ENCODE measurements at regions of chr19 and their contacts with region 1.

Region 1: GRCh38 chr19:51473009-51473707 is 5.2 kb upstream of the CEACAM18 start:
- DNase-seq: no peak
- ATAC-seq: peak; percentile 60

Region 2: DNA sequence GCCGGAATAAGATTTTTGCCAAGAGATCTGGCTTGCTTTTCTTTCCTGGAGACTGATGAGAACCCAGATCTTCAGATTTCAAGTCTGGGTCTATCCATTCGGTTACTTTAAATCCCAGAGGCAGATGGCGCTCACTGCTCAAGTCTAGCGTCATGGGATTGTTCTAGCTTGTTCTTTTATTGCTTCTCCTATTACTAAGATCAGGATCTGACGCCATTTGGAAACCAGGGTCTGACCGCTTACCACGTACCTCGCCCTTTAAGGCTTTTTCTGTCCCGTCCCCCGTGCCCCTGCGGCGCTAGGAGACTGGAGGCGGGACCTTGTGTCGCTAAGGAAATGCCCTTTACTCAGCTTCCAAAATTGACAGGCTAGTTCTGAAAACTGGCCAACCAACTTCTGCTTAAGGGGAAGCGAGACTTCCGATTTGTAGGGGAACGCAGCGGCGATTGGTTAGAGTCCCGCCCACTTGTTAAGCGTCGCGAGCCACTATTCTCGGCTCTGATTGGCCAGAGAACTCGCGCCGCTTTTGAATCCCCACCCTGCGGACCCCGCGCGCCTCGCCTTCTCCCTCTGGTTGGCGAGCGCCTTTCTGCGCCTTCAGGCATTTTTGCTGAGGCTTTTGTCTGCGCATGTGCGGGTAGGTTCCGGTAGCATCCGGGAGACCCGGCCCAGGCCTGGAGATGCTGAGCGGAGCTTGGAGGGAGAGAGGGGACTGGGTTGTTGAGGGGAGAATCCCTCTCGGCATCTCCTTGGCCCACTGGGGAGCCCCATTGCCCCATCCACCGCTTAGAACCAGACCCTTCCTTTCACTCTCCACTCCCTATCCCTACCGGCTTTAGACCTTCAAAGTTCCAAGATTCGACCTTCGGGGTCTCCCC is 79.0 kb before region 1 on chr19:
- intact Hi-C with region 1: no loop called
- DNase-seq: peak; percentile 95
- ATAC-seq: peak; percentile 98

Region 3: GRCh38 chr19:51460164-51460992 is 12.8 kb before region 1 on chr19:
- intact Hi-C with region 1: no loop called
- DNase-seq: no peak
- ATAC-seq: no peak

Region 4: DNA sequence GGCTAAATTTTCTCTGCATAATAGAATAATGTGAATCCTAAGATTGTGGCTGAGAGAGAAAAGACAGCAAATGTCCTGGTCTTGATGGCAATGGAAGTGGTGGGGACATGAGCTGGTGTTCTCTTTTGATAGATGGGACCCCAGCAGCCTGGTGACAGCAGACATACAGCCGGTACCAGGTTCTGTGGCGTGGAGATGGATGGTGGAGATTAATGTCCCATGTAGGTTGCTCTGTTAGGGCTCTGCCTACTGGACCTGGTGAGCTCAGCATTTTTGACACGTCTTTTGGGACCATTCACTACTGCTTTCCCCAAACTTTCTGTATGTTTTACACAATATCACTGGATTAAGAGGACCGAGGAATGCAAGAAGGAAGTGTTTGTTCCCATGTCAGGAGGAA is 181.6 kb after region 1 on chr19:
- intact Hi-C with region 1: loop called (anchors 5 kb)
- DNase-seq: no peak
- ATAC-seq: no peak

Measured in Right ventricle myocardium inferior (tissue), 1 donor.